ENCODE measurements at regions of chr15 and their contacts with region 1.

Region 1: GRCh38 chr15:38631126-38632075 is 66.8 kb upstream of the RASGRP1 start:
- DNase-seq: no peak
- ATAC-seq: no peak
- H3K4me3 Mint-ChIP-seq: no peak overlapping the region
- H3K27ac Mint-ChIP-seq: peak overlapping the region; percentile 51
- H3K4me1 Mint-ChIP-seq: peaks cover 32% of the 10 kb centered on the region
- H3K27me3 Mint-ChIP-seq: no peaks in the 10 kb centered on the region

Region 2: GRCh38 chr15:38252481-38253412 is 378.7 kb before region 1 on chr15 and contains the start of gene SPRED1:
- CTCF ChIA-PET with region 1: no interaction called
- POLR2A ChIA-PET with region 1: no interaction called
- DNase-seq: no peak
- ATAC-seq: peak; percentile 35
- H3K4me3 Mint-ChIP-seq: peak within 1 kb of the TSS; percentile 72
- H3K27ac Mint-ChIP-seq: peak within 1 kb of the TSS; percentile 1
- H3K4me1 Mint-ChIP-seq: peaks cover 33% of the 10 kb centered on the region
- H3K27me3 Mint-ChIP-seq: peaks cover 61% of the 10 kb centered on the region
- total RNA-seq, gene SPRED1: 0.31 to 0.79 TPM

Region 3: DNA sequence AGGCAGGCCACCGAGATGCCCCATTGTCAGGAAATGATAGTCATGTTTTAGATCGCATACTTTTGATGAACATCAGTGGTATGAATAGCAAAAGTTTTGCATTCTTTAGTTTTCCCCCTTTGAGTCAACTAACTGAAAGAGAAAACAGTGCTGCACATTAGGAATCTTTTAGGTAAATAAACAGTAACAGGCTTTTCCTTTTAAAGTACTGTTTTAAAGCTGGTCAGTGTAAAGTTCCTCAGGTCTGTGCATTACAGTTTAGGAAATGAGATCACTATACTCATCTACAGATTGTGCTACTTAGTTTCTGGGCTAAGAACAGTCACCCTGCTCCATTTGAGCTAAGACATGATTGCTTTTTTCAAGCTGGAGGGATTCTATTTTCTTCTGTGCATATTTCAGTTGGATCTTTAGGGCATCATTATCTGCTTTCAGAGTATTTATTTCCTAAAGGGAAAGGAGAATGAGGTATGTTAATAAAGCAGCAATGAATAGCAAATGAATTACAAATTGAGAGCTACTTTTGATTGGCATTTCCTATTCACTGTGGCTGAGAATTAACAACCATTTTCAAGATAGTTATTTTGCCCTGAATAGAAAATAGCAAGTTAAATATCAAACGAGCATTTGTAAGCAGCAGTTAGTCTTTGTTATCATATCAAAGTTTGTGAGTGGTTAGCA is 141.0 kb before region 1 on chr15:
- CTCF ChIA-PET with region 1: no interaction called
- POLR2A ChIA-PET with region 1: no interaction called
- DNase-seq: no peak
- ATAC-seq: no peak
- H3K4me3 Mint-ChIP-seq: no peak overlapping the region
- H3K27ac Mint-ChIP-seq: peak overlapping the region; percentile 31
- H3K4me1 Mint-ChIP-seq: peaks cover 26% of the 10 kb centered on the region
- H3K27me3 Mint-ChIP-seq: no peaks in the 10 kb centered on the region

Region 4: GRCh38 chr15:38603672-38604071 is 27.7 kb before region 1 on chr15:
- CTCF ChIA-PET with region 1: no interaction called
- POLR2A ChIA-PET with region 1: no interaction called
- DNase-seq: no peak
- ATAC-seq: no peak
- H3K4me3 Mint-ChIP-seq: no peak overlapping the region
- H3K27ac Mint-ChIP-seq: peak overlapping the region; percentile 1
- H3K4me1 Mint-ChIP-seq: peaks cover 18% of the 10 kb centered on the region
- H3K27me3 Mint-ChIP-seq: no peaks in the 10 kb centered on the region

Region 5: GRCh38 chr15:38652998-38653397 is 21.6 kb after region 1 on chr15:
- CTCF ChIA-PET with region 1: interaction called, 21 read pairs
- POLR2A ChIA-PET with region 1: interaction called, 15 read pairs
- DNase-seq: peak; percentile 92
- ATAC-seq: peak; percentile 82
- H3K4me3 Mint-ChIP-seq: peak overlapping the region; percentile 80
- H3K27ac Mint-ChIP-seq: peak overlapping the region; percentile 95
- H3K4me1 Mint-ChIP-seq: peaks cover 85% of the 10 kb centered on the region
- H3K27me3 Mint-ChIP-seq: no peaks in the 10 kb centered on the region

Region 6: GRCh38 chr15:38705436-38706219 is 74.2 kb after region 1 on chr15:
- CTCF ChIA-PET with region 1: no interaction called
- POLR2A ChIA-PET with region 1: no interaction called
- DNase-seq: no peak
- ATAC-seq: no peak
- H3K4me3 Mint-ChIP-seq: no peak overlapping the region
- H3K27ac Mint-ChIP-seq: no peak overlapping the region
- H3K4me1 Mint-ChIP-seq: peaks cover 7% of the 10 kb centered on the region
- H3K27me3 Mint-ChIP-seq: peaks cover 10% of the 10 kb centered on the region

Measured in activated CD8-positive, alpha-beta T cell treated with anti-CD3 and anti-CD28 coated beads, Interleukin-2, amount 10 ng/mL, durations not matched to agents 7 days and 5 days (primary cell).